ENCODE measurements at regions of chr15 and their contacts with region 1.

Region 1: GRCh38 chr15:89623165-89623564 is 32.1 kb downstream of the KIF7 start:
- DNase-seq: no peak
- H3K4me3 ChIP-seq: no peak overlapping the region
- H3K4me1 ChIP-seq: no peaks in the 10 kb centered on the region
- H3K27me3 ChIP-seq: no peaks in the 10 kb centered on the region

Region 2: DNA sequence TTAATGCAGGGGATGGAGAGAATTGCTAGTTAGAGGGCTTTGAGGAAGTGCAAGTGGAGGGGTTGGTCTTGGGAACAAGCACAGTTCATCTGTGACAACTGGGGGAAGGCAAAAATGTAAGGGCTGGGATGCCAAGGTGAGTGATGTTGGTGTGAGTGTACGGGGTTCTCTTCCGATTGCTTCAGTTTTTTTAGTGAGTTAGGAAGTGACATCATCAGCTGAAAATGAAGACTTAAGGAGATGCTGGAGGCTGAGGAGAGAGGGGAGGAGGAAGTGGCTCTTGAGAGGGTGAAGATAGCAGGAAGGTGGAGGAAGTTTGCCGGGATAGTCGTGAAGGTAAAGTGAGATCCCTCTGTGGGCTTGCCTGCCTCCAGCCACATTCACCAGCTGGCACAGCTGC is 35.2 kb before region 1 on chr15:
- in situ Hi-C with region 1: loop called (anchors 5 kb)
- DNase-seq: no peak
- H3K4me3 ChIP-seq: no peak overlapping the region
- H3K4me1 ChIP-seq: no peaks in the 10 kb centered on the region
- H3K27me3 ChIP-seq: no peaks in the 10 kb centered on the region

Measured in HAP-1 (cell line).